ENCODE measurements at regions of chr4 and their contacts with region 1.

Region 1: GRCh38 chr4:81827577-81828202 is 356.0 kb upstream of the RASGEF1B start:
- DNase-seq: peak; percentile 61
- ATAC-seq: peak; percentile 96
- H3K4me3 Mint-ChIP-seq: no peak overlapping the region
- H3K27ac Mint-ChIP-seq: peak overlapping the region; percentile 63
- H3K4me1 Mint-ChIP-seq: peaks cover 17% of the 10 kb centered on the region
- H3K27me3 Mint-ChIP-seq: peaks cover 10% of the 10 kb centered on the region

Region 2: DNA sequence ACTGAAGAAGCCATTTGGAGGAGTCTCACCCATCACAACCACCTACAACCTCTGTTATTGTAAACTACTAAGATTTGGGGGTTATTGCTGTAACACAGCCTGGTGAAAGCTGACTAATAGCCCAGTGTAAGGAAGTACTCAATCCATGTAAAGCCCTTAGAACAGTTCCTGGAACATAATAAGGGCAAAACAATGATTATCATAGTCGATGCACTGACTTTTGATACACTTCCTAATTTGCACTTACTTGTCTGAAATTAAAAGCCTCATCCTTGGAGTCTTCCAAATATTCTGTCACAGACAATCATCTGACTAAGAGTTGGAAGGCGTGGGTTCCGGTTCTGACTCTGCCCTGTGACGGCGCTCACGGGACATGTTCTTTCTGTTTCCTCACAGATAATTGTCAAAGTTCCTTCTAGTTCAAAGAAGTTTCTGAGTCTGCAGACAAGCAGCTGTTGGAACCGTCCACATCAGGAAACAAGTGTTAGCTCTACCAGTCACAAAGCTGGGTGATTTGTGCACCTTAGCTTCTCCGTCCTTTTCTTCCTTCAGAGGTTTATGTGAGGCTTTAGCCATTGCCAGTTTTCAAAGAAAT is 322.6 kb before region 1 on chr4:
- CTCF ChIA-PET with region 1: no interaction called
- POLR2A ChIA-PET with region 1: interaction called, 4 read pairs
- intact Hi-C with region 1: loop called in 1 of 2 experiments (anchors 5 kb)
- DNase-seq: peak; percentile 83
- ATAC-seq: peak; percentile 80
- H3K4me3 Mint-ChIP-seq: peak overlapping the region; percentile 18
- H3K27ac Mint-ChIP-seq: peak overlapping the region; percentile 35
- H3K4me1 Mint-ChIP-seq: peaks cover 40% of the 10 kb centered on the region
- H3K27me3 Mint-ChIP-seq: no peaks in the 10 kb centered on the region

Region 3: GRCh38 chr4:81648576-81649275 is 179.0 kb before region 1 on chr4:
- CTCF ChIA-PET with region 1: no interaction called
- POLR2A ChIA-PET with region 1: no interaction called
- intact Hi-C with region 1: loop called in 1 of 2 experiments (anchors 5 kb)
- DNase-seq: peak; percentile 65
- ATAC-seq: peak; percentile 46
- H3K4me3 Mint-ChIP-seq: peak overlapping the region; percentile 26
- H3K27ac Mint-ChIP-seq: peak overlapping the region; percentile 26
- H3K4me1 Mint-ChIP-seq: peaks cover 60% of the 10 kb centered on the region
- H3K27me3 Mint-ChIP-seq: no peaks in the 10 kb centered on the region

Region 4: DNA sequence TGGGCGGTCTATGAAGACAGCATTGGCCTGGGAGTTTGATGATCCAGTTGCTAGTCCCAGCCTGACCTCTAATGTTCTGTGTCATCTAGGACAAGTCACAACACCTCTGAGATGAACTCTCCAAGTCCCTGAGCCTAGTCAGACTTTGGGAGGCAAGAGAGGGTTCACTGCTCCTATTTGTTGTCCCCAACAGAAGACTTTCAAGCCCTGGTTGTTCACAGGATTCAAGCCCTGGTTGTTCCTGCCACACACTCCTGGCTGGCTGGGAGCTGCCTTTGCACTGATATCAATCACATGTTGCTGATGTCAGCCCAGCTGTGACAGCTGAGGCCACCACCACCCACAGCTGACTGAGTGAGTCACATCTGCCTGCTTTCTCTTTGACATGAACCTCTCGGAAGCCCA is 102.8 kb before region 1 on chr4:
- CTCF ChIA-PET with region 1: interaction called, 3 read pairs
- POLR2A ChIA-PET with region 1: no interaction called
- intact Hi-C with region 1: loop called in 1 of 2 experiments (anchors 1 kb)
- DNase-seq: peak; percentile 85
- ATAC-seq: peak; percentile 100
- H3K4me3 Mint-ChIP-seq: no peak overlapping the region
- H3K27ac Mint-ChIP-seq: no peak overlapping the region
- H3K4me1 Mint-ChIP-seq: peaks cover 17% of the 10 kb centered on the region
- H3K27me3 Mint-ChIP-seq: peaks cover 3% of the 10 kb centered on the region

Region 5: DNA sequence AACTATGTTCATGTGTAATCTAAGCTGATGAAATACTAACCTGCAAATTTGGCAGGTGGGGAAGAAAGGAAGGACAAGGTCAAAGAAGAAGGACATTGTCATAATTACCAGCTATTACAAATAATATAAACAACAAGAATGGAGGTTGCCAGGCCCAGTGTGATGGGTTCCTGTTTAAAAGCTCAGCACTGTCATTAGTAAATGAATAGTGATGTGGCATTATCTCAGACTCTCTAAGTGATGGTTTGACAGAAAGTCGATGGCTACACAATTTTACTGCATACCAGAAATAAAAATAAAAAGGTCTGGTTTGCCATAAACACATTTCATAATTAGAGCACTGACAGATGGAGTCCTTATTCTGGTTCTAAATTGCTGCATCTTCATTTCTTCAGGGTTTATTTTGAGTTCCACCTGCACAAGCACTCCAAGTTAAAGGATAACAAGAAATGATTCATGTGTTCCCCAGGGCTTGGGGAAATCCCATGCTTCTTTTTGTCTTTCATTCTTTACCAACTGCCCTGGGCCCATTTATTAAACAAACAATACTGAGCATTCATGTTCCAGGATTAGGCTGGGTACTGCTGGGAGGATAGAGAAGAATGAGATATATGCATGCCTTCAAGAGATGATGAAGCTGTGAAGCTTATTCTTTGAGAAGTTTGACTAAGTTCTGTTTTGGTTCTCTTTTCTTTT is 11.8 kb after region 1 on chr4:
- CTCF ChIA-PET with region 1: interaction called, 5 read pairs
- POLR2A ChIA-PET with region 1: no interaction called
- intact Hi-C with region 1: loop called in 1 of 2 experiments (anchors 1 kb)
- DNase-seq: peak; percentile 34
- ATAC-seq: peak; percentile 82
- H3K4me3 Mint-ChIP-seq: no peak overlapping the region
- H3K27ac Mint-ChIP-seq: no peak overlapping the region
- H3K4me1 Mint-ChIP-seq: peaks cover 12% of the 10 kb centered on the region
- H3K27me3 Mint-ChIP-seq: no peaks in the 10 kb centered on the region

Measured in activated CD4-positive, alpha-beta T cell treated with anti-CD3 and anti-CD28 coated beads for 36 hours (primary cell).